ENCODE measurements at regions of chr19 and their contacts with region 1.

Region 1: GRCh38 chr19:40798223-40798996 is 581 bp upstream of the EGLN2 start:
- DNase-seq: peak; percentile 100
- ATAC-seq: peak; percentile 80
- H3K4me3 Mint-ChIP-seq: peak overlapping the region; percentile 86
- H3K27ac Mint-ChIP-seq: peak overlapping the region; percentile 98
- H3K4me1 Mint-ChIP-seq: peaks cover 35% of the 10 kb centered on the region
- H3K27me3 Mint-ChIP-seq: no peaks in the 10 kb centered on the region
- CTCF ChIP-seq: no peak

Region 2: GRCh38 chr19:40716655-40717324 is 81.6 kb before region 1 on chr19 and contains the starts of genes COQ8B and ITPKC:
- CTCF ChIA-PET with region 1: interaction called, 6 read pairs
- POLR2A ChIA-PET with region 1: interaction called, 18 read pairs
- DNase-seq: peak; percentile 100
- ATAC-seq: peak; percentile 55
- H3K4me3 Mint-ChIP-seq: peak within 1 kb of the TSS; percentile 98
- H3K27ac Mint-ChIP-seq: peak within 1 kb of the TSS; percentile 99
- H3K4me1 Mint-ChIP-seq: peaks cover 33% of the 10 kb centered on the region
- H3K27me3 Mint-ChIP-seq: no peaks in the 10 kb centered on the region
- CTCF ChIP-seq: no peak
- total RNA-seq, gene COQ8B: 55.6 to 62.9 TPM (median 59.9 TPM) in 3 replicates
- total RNA-seq, gene ITPKC: 10.4 to 13.8 TPM (median 10.6 TPM) in 3 replicates

Region 3: GRCh38 chr19:40744554-40745401 is 53.6 kb before region 1 on chr19:
- CTCF ChIA-PET with region 1: interaction called, 13 read pairs
- POLR2A ChIA-PET with region 1: interaction called, 19 read pairs
- DNase-seq: peak; percentile 54
- ATAC-seq: peak; percentile 59
- H3K4me3 Mint-ChIP-seq: no peak overlapping the region
- H3K27ac Mint-ChIP-seq: peak overlapping the region; percentile 72
- H3K4me1 Mint-ChIP-seq: peaks cover 25% of the 10 kb centered on the region
- H3K27me3 Mint-ChIP-seq: no peaks in the 10 kb centered on the region
- CTCF ChIP-seq: 0 out of 2 replicates have a peak, but pooled peaks have one; percentile 26

Region 4: GRCh38 chr19:40785526-40785925 is 12.9 kb before region 1 on chr19:
- CTCF ChIA-PET with region 1: interaction called, 76 read pairs
- POLR2A ChIA-PET with region 1: interaction called, 3 read pairs
- DNase-seq: no peak
- ATAC-seq: no peak
- H3K4me3 Mint-ChIP-seq: no peak overlapping the region
- H3K27ac Mint-ChIP-seq: no peak overlapping the region
- H3K4me1 Mint-ChIP-seq: peaks cover 3% of the 10 kb centered on the region; the same call in 1 of the 2 replicates
- H3K27me3 Mint-ChIP-seq: no peaks in the 10 kb centered on the region
- CTCF ChIP-seq: no peak

Measured in WTC11 (cell line).